ENCODE measurements at regions of chr12 and their contacts with region 1.

Region 1: GRCh38 chr12:19439059-19440018 is at the start of gene AEBP2:
- DNase-seq: peak; percentile 90
- H3K4me3 Mint-ChIP-seq: peak within 1 kb of the TSS; percentile 98
- H3K27ac Mint-ChIP-seq: peak within 1 kb of the TSS; percentile 99
- H3K4me1 Mint-ChIP-seq: peaks cover 51% of the 10 kb centered on the region
- H3K27me3 Mint-ChIP-seq: no peaks in the 10 kb centered on the region
- total RNA-seq, gene AEBP2: 64.3 and 67.6 TPM in 2 replicates

Region 2: GRCh38 chr12:18165422-18165871 is 1273.9 kb before region 1 on chr12:
- intact Hi-C with region 1: loop called (anchors 10 kb)
- DNase-seq: peak; percentile 14
- H3K4me3 Mint-ChIP-seq: peak overlapping the region; percentile 2
- H3K27ac Mint-ChIP-seq: peak overlapping the region; percentile 69
- H3K4me1 Mint-ChIP-seq: peaks cover 12% of the 10 kb centered on the region
- H3K27me3 Mint-ChIP-seq: no peaks in the 10 kb centered on the region

Region 3: GRCh38 chr12:19462406-19462805 is 23.1 kb after region 1 on chr12:
- intact Hi-C with region 1: loop called (anchors 2 kb)
- DNase-seq: no peak
- H3K4me3 Mint-ChIP-seq: no peak overlapping the region
- H3K27ac Mint-ChIP-seq: no peak overlapping the region
- H3K4me1 Mint-ChIP-seq: peaks cover 27% of the 10 kb centered on the region
- H3K27me3 Mint-ChIP-seq: no peaks in the 10 kb centered on the region